CD4-positive, alpha-beta memory T cell (primary cell): ENCODE measurements at regions of chr6 and their contacts with region 1.

Region 1: GRCh38 chr6:73180763-73181619 is 44.3 kb downstream of the KHDC1L start:
- DNase-seq: peak; percentile 32 to 46 (median 43)
- H3K4me3 ChIP-seq: no peak overlapping the region
- H3K4me3 Mint-ChIP-seq: peak overlapping the region in 7 of 8 donors; percentile 0 to 61 (median 45)
- H3K27ac ChIP-seq: no peak overlapping the region
- H3K27ac Mint-ChIP-seq: no peak overlapping the region
- H3K4me1 ChIP-seq: no peaks in the 10 kb centered on the region
- H3K4me1 Mint-ChIP-seq: peaks cover 0 to 5% (median 4%) of the 10 kb centered on the region in 4 donors
- H3K27me3 ChIP-seq: no peaks in the 10 kb centered on the region
- H3K27me3 Mint-ChIP-seq: peaks cover 2 to 3% of the 10 kb centered on the region in 2 donors

Region 2: GRCh38 chr6:72616406-72617015 is 564.5 kb before region 1 on chr6:
- CTCF ChIA-PET with region 1: interaction called, 6 read pairs
- POLR2A ChIA-PET with region 1: no interaction called
- intact Hi-C with region 1: loop called (anchors 1 kb)
- DNase-seq: peak in 4 of 5 donors; percentile 8 to 32 (median 22)
- H3K4me3 ChIP-seq: no peak overlapping the region
- H3K4me3 Mint-ChIP-seq: no peak overlapping the region
- H3K27ac ChIP-seq: no peak overlapping the region
- H3K27ac Mint-ChIP-seq: peak overlapping the region in 2 of 7 donors; percentile 14 to 36
- H3K4me1 ChIP-seq: peaks cover 36% of the 10 kb centered on the region
- H3K4me1 Mint-ChIP-seq: peaks cover 20 to 41% (median 29%) of the 10 kb centered on the region in 4 donors
- H3K27me3 ChIP-seq: no peaks in the 10 kb centered on the region
- H3K27me3 Mint-ChIP-seq: no peaks in the 10 kb centered on the region